Common myeloid progenitor, CD34-positive (primary cell): ENCODE measurements at regions of chr2 and their contacts with region 1.

Region 1: DNA sequence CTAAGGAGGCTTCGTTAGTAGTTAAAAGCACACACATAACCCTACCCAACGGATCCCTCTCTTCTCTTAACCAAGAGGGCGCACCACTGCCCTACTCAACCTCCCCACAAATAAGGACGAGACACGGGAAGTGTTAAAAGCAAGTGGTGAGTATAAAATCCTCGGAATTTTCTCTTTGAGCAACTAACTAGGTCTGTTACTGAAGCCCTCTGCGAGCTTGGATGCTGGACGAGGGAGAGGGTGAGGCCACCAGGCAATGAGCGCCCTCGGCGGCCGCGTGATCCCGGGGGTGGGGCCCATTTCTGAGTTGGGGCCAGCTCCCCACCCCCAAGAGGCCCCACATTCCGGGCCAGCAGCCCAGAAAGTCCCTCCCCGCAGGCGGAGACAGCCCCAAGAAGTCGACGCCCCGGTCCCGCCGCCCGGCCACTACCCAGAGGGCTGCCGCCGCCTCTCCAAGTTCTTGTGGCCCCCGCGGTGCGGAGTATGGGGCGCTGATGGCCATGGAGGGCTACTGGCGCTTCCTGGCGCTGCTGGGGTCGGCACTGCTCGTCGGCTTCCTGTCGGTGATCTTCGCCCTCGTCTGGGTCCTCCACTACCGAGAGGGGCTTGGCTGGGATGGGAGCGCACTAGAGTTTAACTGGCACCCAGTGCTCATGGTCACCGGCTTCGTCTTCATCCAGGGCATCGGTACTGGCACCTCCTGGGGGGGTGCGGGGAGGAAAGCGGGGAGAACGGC is at the start of gene CYBRD1:
- DNase-seq: peak; percentile 62 to 88 (median 78)
- H3K4me3 ChIP-seq: peak within 1 kb of the TSS; percentile 61 to 93 (median 86)
- H3K27ac ChIP-seq: peak within 1 kb of the TSS; percentile 66 to 86
- H3K4me1 ChIP-seq: peaks cover 13 to 47% (median 22%) of the 10 kb centered on the region in 4 experiments
- H3K27me3 ChIP-seq: no peaks in the 10 kb centered on the region

Region 2: GRCh38 chr2:171475979-171476378 is 46.2 kb before region 1 on chr2:
- CTCF ChIA-PET with region 1: no interaction called
- POLR2A ChIA-PET with region 1: no interaction called
- DNase-seq: no peak
- H3K4me3 ChIP-seq: no peak overlapping the region
- H3K27ac ChIP-seq: no peak overlapping the region
- H3K4me1 ChIP-seq: no peaks in the 10 kb centered on the region
- H3K27me3 ChIP-seq: no peaks in the 10 kb centered on the region

Region 3: DNA sequence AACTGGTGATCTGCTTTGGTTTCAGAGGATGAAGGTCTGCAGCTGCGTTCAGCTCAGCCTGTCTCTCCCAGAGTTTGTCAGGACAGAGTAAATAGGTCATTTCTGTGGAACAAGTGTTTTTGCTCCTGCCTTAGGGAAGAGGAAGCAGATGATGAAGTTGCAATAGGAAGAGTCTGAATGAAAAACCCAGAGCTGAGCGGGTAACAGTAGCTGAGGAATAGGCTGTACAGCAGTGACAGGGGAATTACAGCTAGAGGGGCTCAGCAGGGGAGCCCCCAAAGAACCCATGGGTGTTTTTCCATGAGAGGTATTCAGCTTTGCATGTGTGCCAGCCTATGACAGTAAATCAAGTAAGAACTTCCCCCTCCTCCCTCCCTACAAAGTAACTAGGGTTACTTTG is 10.2 kb before region 1 on chr2:
- CTCF ChIA-PET with region 1: interaction called, 3 read pairs
- POLR2A ChIA-PET with region 1: interaction called, 11 read pairs
- DNase-seq: peak in 1 of 3 donors; percentile 11
- H3K4me3 ChIP-seq: peak overlapping the region in 1 of 7 experiments; percentile 12
- H3K27ac ChIP-seq: no peak overlapping the region
- H3K4me1 ChIP-seq: peaks cover 17 to 35% (median 22%) of the 10 kb centered on the region in 4 experiments
- H3K27me3 ChIP-seq: no peaks in the 10 kb centered on the region